Transverse colon (tissue), 4 donors: ENCODE measurements at regions of chr2 and their contacts with region 1.

Region 1: GRCh38 chr2:25726522-25726921 is 53.1 kb upstream of the DTNB start:
- DNase-seq: no peak
- H3K4me3 ChIP-seq: no peak overlapping the region
- H3K27ac ChIP-seq: no peak overlapping the region
- H3K4me1 ChIP-seq: no peaks in the 10 kb centered on the region
- H3K27me3 ChIP-seq: peaks cover 4% of the 10 kb centered on the region
- CTCF ChIP-seq: no peak
- EP300 ChIP-seq: no peak
- POLR2A ChIP-seq: no peak

Region 2: GRCh38 chr2:25677877-25678276 is 48.6 kb before region 1 on chr2:
- in situ Hi-C with region 1: no loop called
- intact Hi-C with region 1: loop called (anchors 2 kb)
- DNase-seq: no peak
- H3K4me3 ChIP-seq: no peak overlapping the region
- H3K27ac ChIP-seq: no peak overlapping the region
- H3K4me1 ChIP-seq: peaks cover 0 to 5% (median under 1%) of the 10 kb centered on the region in 4 donors
- H3K27me3 ChIP-seq: no peaks in the 10 kb centered on the region
- CTCF ChIP-seq: no peak
- EP300 ChIP-seq: no peak
- POLR2A ChIP-seq: no peak

Region 3: GRCh38 chr2:25982273-25982967 is 255.9 kb after region 1 on chr2 and contains the start of gene KIF3C:
- in situ Hi-C with region 1: no loop called
- intact Hi-C with region 1: no loop called
- DNase-seq: peak; percentile 66
- H3K4me3 ChIP-seq: peak within 1 kb of the TSS; percentile 37 to 84 (median 62)
- H3K27ac ChIP-seq: peak within 1 kb of the TSS; percentile 64 to 80 (median 70)
- H3K4me1 ChIP-seq: peaks cover 5 to 15% (median 10%) of the 10 kb centered on the region in 4 donors
- H3K27me3 ChIP-seq: no peaks in the 10 kb centered on the region
- CTCF ChIP-seq: no peak
- EP300 ChIP-seq: no peak
- POLR2A ChIP-seq: no peak
- total RNA-seq, gene KIF3C: 0.37 to 3.2 (median 2.0) TPM